ENCODE measurements at regions of chr11 and their contacts with region 1.

Region 1: DNA sequence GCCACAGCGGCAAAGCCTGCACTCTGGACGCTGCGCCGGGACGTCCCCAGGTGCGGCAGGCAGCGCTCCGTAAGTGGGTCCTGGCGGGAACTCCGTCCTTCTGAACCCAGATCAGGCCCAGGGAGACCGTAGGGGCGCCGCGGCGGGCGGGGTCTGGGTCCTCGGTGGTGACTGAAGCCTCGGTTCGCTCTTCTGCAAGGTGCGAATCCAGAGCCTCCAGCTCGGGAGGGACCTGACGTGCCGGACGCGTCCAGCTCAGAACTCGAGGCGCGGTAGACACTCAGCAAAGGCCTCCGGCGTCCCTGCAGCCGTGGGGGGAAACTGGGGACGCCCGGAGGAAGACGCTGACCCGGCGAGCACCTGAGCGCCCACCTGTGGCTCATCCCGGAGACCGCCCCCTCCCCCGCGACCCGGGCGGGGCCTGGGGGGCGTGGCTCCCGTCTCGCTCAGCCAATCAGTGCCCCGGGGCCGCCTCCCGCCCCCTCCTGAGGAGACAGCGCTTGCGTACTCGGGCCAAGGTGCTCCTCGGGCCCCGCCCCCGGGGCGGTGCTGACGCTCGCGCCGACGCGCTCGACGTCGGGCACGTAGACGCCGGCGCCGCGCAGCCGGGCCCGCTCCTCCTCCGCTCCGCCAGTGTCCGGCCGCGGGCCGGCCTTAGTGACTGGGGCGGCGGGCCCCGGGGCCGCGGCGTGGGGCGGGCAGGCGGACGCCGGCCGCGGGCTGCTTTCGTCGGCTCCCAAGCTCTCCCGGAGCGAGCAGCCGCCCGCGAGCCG is at the start of gene PPFIA1:
- DNase-seq: peak; percentile 96
- H3K4me3 ChIP-seq: peak within 1 kb of the TSS; percentile 82 to 98 (median 95)
- H3K27ac ChIP-seq: peak within 1 kb of the TSS; percentile 76
- H3K4me1 ChIP-seq: peaks cover 13% of the 10 kb centered on the region
- H3K27me3 ChIP-seq: no peaks in the 10 kb centered on the region
- CTCF ChIP-seq: peak in 1 of 2 donors; percentile 13
- total RNA-seq, gene PPFIA1: 42.5 to 47.1 TPM

Region 2: GRCh38 chr11:69909561-69910496 is 360.5 kb before region 1 on chr11:
- CTCF ChIA-PET with region 1: no interaction called
- dilution Hi-C with region 1: no loop called
- in situ Hi-C with region 1: no loop called
- intact Hi-C with region 1: loop called (anchors 5 kb)
- DNase-seq: no peak
- H3K4me3 ChIP-seq: no peak overlapping the region
- H3K27ac ChIP-seq: no peak overlapping the region
- H3K4me1 ChIP-seq: peaks cover 28% of the 10 kb centered on the region
- H3K27me3 ChIP-seq: no peaks in the 10 kb centered on the region
- CTCF ChIP-seq: peak; percentile 35 to 65

Region 3: DNA sequence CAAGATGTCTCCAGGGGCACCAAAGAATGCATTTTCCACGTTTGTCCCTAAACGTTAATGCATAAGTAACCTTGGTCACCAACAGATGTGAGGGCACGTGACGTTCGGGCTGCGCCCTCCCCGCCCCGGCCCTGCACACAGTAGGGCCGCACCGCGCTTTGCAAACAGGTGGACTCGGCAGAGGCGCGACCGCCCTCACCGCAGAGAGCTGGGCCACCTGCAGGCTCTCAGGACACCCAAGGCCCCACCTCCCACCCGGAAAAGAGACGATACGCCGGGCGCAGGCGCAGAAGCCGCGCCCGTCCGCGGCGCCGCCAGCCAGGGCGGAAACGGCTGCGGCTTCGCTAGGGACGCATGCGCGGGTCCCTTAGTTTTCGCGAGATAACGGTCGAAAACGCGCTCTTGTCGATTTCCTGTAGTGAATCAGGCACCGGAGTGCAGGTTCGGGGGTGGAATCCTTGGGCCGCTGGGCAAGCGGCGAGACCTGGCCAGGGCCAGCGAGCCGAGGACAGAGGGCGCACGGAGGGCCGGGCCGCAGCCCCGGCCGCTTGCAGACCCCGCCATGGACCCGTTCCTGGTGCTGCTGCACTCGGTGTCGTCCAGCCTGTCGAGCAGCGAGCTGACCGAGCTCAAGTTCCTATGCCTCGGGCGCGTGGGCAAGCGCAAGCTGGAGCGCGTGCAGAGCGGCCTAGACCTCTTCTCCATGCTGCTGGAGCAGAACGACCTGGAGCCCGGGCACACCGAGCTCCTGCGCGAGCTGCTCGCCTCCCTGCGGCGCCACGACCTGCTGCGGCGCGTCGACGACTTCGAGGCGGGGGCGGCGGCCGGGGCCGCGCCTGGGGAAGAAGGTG is 67.2 kb before region 1 on chr11 and contains the start of gene FADD:
- CTCF ChIA-PET with region 1: no interaction called
- dilution Hi-C with region 1: no loop called
- in situ Hi-C with region 1: no loop called
- intact Hi-C with region 1: loop called (anchors 1 kb)
- DNase-seq: peak; percentile 93
- H3K4me3 ChIP-seq: peak within 1 kb of the TSS; percentile 90 to 93 (median 91)
- H3K27ac ChIP-seq: peak within 1 kb of the TSS; percentile 91
- H3K4me1 ChIP-seq: peaks cover 22% of the 10 kb centered on the region
- H3K27me3 ChIP-seq: no peaks in the 10 kb centered on the region
- CTCF ChIP-seq: no peak
- total RNA-seq, gene FADD: 31.8 to 45.0 TPM

Region 4: DNA sequence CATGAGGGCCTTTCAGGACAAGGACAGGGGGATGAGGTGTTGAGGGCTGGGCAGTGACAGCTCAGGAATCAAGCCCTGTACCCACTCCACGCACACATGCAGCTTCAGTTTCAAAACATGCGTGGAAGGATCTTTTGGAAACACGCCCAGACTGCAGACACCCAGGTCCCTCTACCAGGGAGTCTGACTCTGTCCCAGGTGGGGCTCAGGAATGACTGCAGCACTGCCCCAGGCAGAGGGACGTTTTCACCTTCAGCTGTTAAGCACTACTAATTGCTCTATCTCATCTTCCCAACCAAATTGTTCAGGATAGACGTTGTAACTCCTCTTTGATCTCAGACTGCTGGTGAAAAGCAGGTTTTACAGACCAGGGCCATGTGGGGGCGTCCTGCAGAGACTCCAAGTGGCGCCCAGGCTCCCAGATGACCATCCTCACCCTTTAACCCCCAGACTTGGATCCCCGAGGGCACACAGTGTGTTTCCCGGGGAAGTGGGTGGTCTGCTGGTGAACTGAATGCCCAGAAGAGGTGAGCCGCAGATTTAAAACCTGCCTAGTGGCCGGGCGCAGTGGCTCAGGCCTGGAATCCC is 43.4 kb before region 1 on chr11:
- CTCF ChIA-PET with region 1: no interaction called
- dilution Hi-C with region 1: no loop called
- in situ Hi-C with region 1: no loop called
- intact Hi-C with region 1: loop called (anchors 1 kb)
- DNase-seq: no peak
- H3K4me3 ChIP-seq: no peak overlapping the region
- H3K27ac ChIP-seq: no peak overlapping the region
- H3K4me1 ChIP-seq: no peaks in the 10 kb centered on the region
- H3K27me3 ChIP-seq: peaks cover 7% of the 10 kb centered on the region
- CTCF ChIP-seq: peak; percentile 25 to 46

Region 5: DNA sequence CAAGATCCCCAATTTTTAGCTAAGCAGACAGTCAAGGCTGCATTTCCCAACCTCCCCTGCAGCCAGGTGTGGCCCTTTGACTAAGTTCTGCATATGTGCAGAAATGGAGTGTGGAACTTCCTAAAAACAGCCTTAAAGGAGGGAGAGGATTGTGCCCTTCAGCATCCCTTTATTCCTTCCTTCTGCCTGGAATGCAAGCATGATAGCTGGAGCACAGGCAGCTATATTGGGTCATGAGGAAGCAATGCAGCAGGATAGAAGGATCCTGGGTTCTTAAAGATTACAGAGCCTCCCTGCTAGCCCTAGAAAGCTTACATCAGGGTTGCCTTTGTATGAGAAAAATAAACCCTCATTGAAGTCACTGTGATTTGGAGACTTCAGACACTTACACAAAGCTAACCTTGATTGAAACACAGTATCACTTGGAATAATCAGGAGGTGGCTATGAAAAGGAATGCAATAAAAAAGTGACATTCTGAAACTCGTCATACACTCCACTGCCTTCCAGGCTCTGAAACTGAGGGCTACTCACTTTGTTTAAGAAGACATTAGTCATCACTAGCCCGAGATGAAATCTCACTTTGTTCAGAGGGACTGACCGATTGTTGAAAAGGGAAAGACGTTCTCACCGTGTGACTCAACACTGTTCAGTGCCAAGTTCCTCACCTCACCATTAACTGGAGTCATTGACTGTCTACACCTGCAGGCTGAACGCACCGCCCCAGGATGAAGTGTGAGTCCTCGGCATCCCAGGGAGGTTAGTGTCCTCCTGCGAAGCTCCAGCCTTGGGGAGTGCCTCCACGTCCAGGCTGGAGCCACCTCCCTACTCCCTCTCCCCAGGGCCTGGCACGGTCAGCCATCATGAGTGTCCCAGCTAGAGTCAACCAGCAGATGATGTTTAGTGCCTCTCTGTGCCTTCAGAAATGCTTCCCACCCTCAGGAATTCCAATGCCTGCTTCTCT is 37.0 kb before region 1 on chr11:
- CTCF ChIA-PET with region 1: no interaction called
- dilution Hi-C with region 1: no loop called
- in situ Hi-C with region 1: no loop called
- intact Hi-C with region 1: loop called (anchors 2 kb)
- DNase-seq: peak; percentile 100
- H3K4me3 ChIP-seq: no peak overlapping the region
- H3K27ac ChIP-seq: peak overlapping the region; percentile 77
- H3K4me1 ChIP-seq: peaks cover 13% of the 10 kb centered on the region
- H3K27me3 ChIP-seq: peaks cover 5% of the 10 kb centered on the region
- CTCF ChIP-seq: no peak

Region 6: GRCh38 chr11:70397983-70398833 is 127.9 kb after region 1 on chr11 and contains the start of gene CTTN:
- CTCF ChIA-PET with region 1: no interaction called
- dilution Hi-C with region 1: no loop called
- in situ Hi-C with region 1: no loop called
- intact Hi-C with region 1: loop called (anchors 2 kb)
- DNase-seq: peak; percentile 86
- H3K4me3 ChIP-seq: peak within 1 kb of the TSS; percentile 71 to 94 (median 93)
- H3K27ac ChIP-seq: peak within 1 kb of the TSS; percentile 88
- H3K4me1 ChIP-seq: peaks cover 25% of the 10 kb centered on the region
- H3K27me3 ChIP-seq: no peaks in the 10 kb centered on the region
- CTCF ChIP-seq: no peak
- total RNA-seq, gene CTTN: 312 to 394 TPM